GM12878 (cell line): ENCODE measurements at regions of chr11 and their contacts with region 1.

Region 1: GRCh38 chr11:128522055-128522942 is 65.1 kb downstream of the ETS1 start:
- DNase-seq: peak; percentile 59
- ATAC-seq: peak; percentile 85
- H3K4me3 ChIP-seq: peak overlapping the region; percentile 96
- H3K27ac ChIP-seq: peak overlapping the region; percentile 96
- H3K4me1 ChIP-seq: peaks cover 17% of the 10 kb centered on the region
- H3K27me3 ChIP-seq: no peaks in the 10 kb centered on the region
- CTCF ChIP-seq: no peak
- EP300 ChIP-seq: no peak
- POLR2A ChIP-seq: peak; percentile 97
- RAD21 ChIP-seq: 0 out of 2 replicates have a peak, but pooled peaks have one; percentile 9

Region 2: GRCh38 chr11:128290106-128290840 is 232.0 kb before region 1 on chr11:
- CTCF ChIA-PET with region 1: interaction called, 26 read pairs
- POLR2A ChIA-PET with region 1: interaction called, 3 read pairs
- RAD21 ChIA-PET with region 1: interaction called, 44 read pairs
- SMC1A ChIA-PET with region 1: interaction called, 22 read pairs
- in situ Hi-C with region 1: no loop called
- intact Hi-C with region 1: loop called (anchors 1 kb)
- DNase-seq: peak; percentile 80
- ATAC-seq: peak; percentile 92
- H3K4me3 ChIP-seq: peak overlapping the region; percentile 53
- H3K27ac ChIP-seq: peak overlapping the region; percentile 75
- H3K4me1 ChIP-seq: peaks cover 25% of the 10 kb centered on the region
- H3K27me3 ChIP-seq: no peaks in the 10 kb centered on the region
- CTCF ChIP-seq: peak; percentile 71 to 89 (median 85)
- EP300 ChIP-seq: peak; percentile 10 to 24; a peak in 1 of 4 replicates
- POLR2A ChIP-seq: peak; percentile 43
- RAD21 ChIP-seq: peak; percentile 99

Region 3: GRCh38 chr11:128323381-128323780 is 198.9 kb before region 1 on chr11:
- CTCF ChIA-PET with region 1: interaction called, 5 read pairs
- POLR2A ChIA-PET with region 1: no interaction called
- RAD21 ChIA-PET with region 1: interaction called, 6 read pairs
- SMC1A ChIA-PET with region 1: interaction called, 7 read pairs
- in situ Hi-C with region 1: no loop called
- intact Hi-C with region 1: loop called (anchors 1 kb)
- DNase-seq: no peak
- ATAC-seq: peak; percentile 43
- H3K4me3 ChIP-seq: no peak overlapping the region
- H3K27ac ChIP-seq: no peak overlapping the region
- H3K4me1 ChIP-seq: peaks cover 11% of the 10 kb centered on the region
- H3K27me3 ChIP-seq: no peaks in the 10 kb centered on the region
- CTCF ChIP-seq: peak; percentile 41 to 46 (median 45); a peak in 5 of 6 replicates
- EP300 ChIP-seq: no peak
- POLR2A ChIP-seq: no peak
- RAD21 ChIP-seq: peak; percentile 74

Region 4: GRCh38 chr11:128472128-128473089 is 49.9 kb before region 1 on chr11:
- CTCF ChIA-PET with region 1: interaction called, 13 read pairs
- POLR2A ChIA-PET with region 1: interaction called, 37 read pairs
- RAD21 ChIA-PET with region 1: interaction called, 144 read pairs
- SMC1A ChIA-PET with region 1: interaction called, 154 read pairs
- in situ Hi-C with region 1: no loop called
- intact Hi-C with region 1: loop called (anchors 1 kb)
- DNase-seq: peak; percentile 93
- ATAC-seq: peak; percentile 78
- H3K4me3 ChIP-seq: peak overlapping the region; percentile 41; the same call in 1 of the 2 replicates
- H3K27ac ChIP-seq: peak overlapping the region; percentile 91
- H3K4me1 ChIP-seq: peaks cover 92% of the 10 kb centered on the region
- H3K27me3 ChIP-seq: no peaks in the 10 kb centered on the region
- CTCF ChIP-seq: no peak
- EP300 ChIP-seq: peak; percentile 76 to 78; a peak in 3 of 4 replicates
- POLR2A ChIP-seq: peak; percentile 75
- RAD21 ChIP-seq: peak; percentile 25; the same call in 1 of the 2 replicates

Region 5: DNA sequence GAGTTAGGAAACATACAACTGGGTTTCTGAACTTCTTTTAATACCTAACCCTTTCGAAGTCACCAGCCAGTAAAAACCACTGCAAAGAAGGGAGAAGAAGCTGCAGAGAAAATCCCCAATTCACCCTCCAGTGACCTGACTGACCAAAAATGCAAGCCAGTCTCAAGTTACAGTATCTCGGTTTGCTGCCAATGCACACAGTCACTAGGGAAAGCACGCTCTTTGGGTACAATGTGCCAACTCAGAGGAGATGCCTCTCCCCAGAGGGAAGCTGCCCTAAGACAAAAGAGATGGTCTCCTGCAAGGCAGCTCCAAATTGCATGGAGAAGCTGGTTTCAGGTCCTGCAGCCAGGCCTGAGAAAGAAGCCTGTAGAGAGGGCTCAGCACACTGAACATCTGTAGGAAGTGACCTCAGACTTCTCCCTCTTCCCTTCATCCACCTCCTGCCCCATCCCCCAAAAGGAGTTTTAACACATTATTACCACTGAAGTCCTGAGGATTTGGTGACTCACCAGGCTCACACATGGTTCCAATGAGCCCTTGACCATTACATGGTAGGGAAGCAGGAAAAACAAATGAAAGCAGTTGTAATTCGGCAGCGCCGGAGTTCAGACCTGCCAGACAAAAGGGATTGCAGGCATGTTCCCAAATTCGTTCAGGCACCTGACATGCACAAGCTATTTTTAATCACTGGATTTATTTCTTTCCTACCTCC is 25.1 kb before region 1 on chr11:
- CTCF ChIA-PET with region 1: interaction called, 7 read pairs
- POLR2A ChIA-PET with region 1: interaction called, 23 read pairs
- RAD21 ChIA-PET with region 1: interaction called, 32 read pairs
- SMC1A ChIA-PET with region 1: interaction called, 82 read pairs
- in situ Hi-C with region 1: no loop called
- intact Hi-C with region 1: no loop called
- DNase-seq: peak; percentile 87
- ATAC-seq: peak; percentile 90
- H3K4me3 ChIP-seq: peak overlapping the region; percentile 47
- H3K27ac ChIP-seq: peak overlapping the region; percentile 88
- H3K4me1 ChIP-seq: peaks cover 72% of the 10 kb centered on the region
- H3K27me3 ChIP-seq: no peaks in the 10 kb centered on the region
- CTCF ChIP-seq: no peak
- EP300 ChIP-seq: peak in 1 of 2 experiments; percentile 56; a peak in 2 of 4 replicates
- POLR2A ChIP-seq: peak; percentile 53; the same call in 1 of the 2 replicates
- RAD21 ChIP-seq: 0 out of 2 replicates have a peak, but pooled peaks have one; percentile 4

Region 6: DNA sequence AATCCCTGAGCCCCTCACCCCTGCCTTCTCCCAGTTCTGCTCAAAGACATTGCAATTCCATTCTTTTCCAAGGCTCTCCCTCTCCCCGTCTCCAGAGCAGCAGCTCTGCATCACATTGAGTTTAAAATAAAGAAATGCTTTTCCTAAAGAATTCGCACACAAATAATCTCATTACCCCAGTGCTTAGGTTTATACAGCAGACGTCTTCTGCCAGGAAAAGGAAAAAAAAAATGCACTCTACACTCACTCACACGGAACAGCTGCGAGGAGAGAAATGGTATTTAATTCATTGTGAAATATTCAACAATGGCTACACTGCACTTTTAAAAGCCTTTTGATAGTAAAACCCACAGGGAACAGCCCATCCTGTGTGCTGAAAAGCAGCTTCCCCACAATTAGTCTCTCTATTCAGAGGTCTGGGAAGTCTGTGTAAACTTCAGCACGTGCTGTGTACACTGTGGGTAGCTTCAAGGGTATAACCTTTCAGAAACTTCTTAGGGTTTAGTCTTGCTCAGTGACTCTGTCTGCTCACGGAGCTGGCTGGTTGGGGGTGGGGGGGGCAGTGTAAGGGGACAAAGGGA is 22.3 kb after region 1 on chr11:
- CTCF ChIA-PET with region 1: interaction called, 9 read pairs
- POLR2A ChIA-PET with region 1: interaction called, 9 read pairs
- RAD21 ChIA-PET with region 1: interaction called, 7 read pairs
- SMC1A ChIA-PET with region 1: interaction called, 14 read pairs
- in situ Hi-C with region 1: no loop called
- intact Hi-C with region 1: no loop called
- DNase-seq: no peak
- ATAC-seq: peak; percentile 16; the same call in 1 of the 3 replicates
- H3K4me3 ChIP-seq: no peak overlapping the region
- H3K27ac ChIP-seq: no peak overlapping the region
- H3K4me1 ChIP-seq: peaks cover 8% of the 10 kb centered on the region
- H3K27me3 ChIP-seq: no peaks in the 10 kb centered on the region
- CTCF ChIP-seq: no peak
- EP300 ChIP-seq: no peak
- POLR2A ChIP-seq: no peak
- RAD21 ChIP-seq: no peak

Region 7: GRCh38 chr11:128624269-128625175 is 102.2 kb after region 1 on chr11:
- CTCF ChIA-PET with region 1: interaction called, 43 read pairs
- POLR2A ChIA-PET with region 1: interaction called, 14 read pairs
- RAD21 ChIA-PET with region 1: interaction called, 96 read pairs
- SMC1A ChIA-PET with region 1: interaction called, 71 read pairs
- in situ Hi-C with region 1: no loop called
- intact Hi-C with region 1: loop called (anchors 2 kb)
- DNase-seq: no peak
- ATAC-seq: peak; percentile 77
- H3K4me3 ChIP-seq: no peak overlapping the region
- H3K27ac ChIP-seq: peak overlapping the region; percentile 86
- H3K4me1 ChIP-seq: peaks cover 66% of the 10 kb centered on the region
- H3K27me3 ChIP-seq: no peaks in the 10 kb centered on the region
- CTCF ChIP-seq: no peak
- EP300 ChIP-seq: peak in 1 of 2 experiments; percentile 21; a peak in 1 of 4 replicates
- POLR2A ChIP-seq: no peak
- RAD21 ChIP-seq: no peak